ENCODE measurements at regions of chr1 and their contacts with region 1.

Region 1: GRCh38 chr1:212760126-212760823 is 31.3 kb downstream of the NSL1 start:
- DNase-seq: peak in 1 of 2 experiments; percentile 83
- H3K4me3 ChIP-seq: no peak overlapping the region
- H3K27ac ChIP-seq: no peak overlapping the region
- H3K4me1 ChIP-seq: peaks cover 0 to 3% (median 0%) of the 10 kb centered on the region in 4 experiments; a peak in 1 of 7 replicates
- H3K27me3 ChIP-seq: no peaks in the 10 kb centered on the region
- CTCF ChIP-seq: peak; percentile 79 to 94 (median 92)
- EP300 ChIP-seq: no peak
- POLR2A ChIP-seq: no peak
- RAD21 ChIP-seq: peak; percentile 65 to 78

Region 2: GRCh38 chr1:212743901-212744475 is 16.3 kb before region 1 on chr1:
- CTCF ChIA-PET with region 1: interaction called, 36 read pairs
- POLR2A ChIA-PET with region 1: interaction called, 3 read pairs
- DNase-seq: no peak
- H3K4me3 ChIP-seq: no peak overlapping the region
- H3K27ac ChIP-seq: no peak overlapping the region
- H3K4me1 ChIP-seq: no peaks in the 10 kb centered on the region
- H3K27me3 ChIP-seq: no peaks in the 10 kb centered on the region
- CTCF ChIP-seq: no peak
- EP300 ChIP-seq: no peak
- POLR2A ChIP-seq: no peak
- RAD21 ChIP-seq: no peak

Region 3: GRCh38 chr1:212827824-212828278 is 67.6 kb after region 1 on chr1:
- CTCF ChIA-PET with region 1: no interaction called
- POLR2A ChIA-PET with region 1: no interaction called
- DNase-seq: no peak
- H3K4me3 ChIP-seq: no peak overlapping the region
- H3K27ac ChIP-seq: no peak overlapping the region
- H3K4me1 ChIP-seq: peaks cover 0 to 2% (median 0%) of the 10 kb centered on the region in 4 experiments; a peak in 1 of 7 replicates
- H3K27me3 ChIP-seq: no peaks in the 10 kb centered on the region
- CTCF ChIP-seq: no peak
- EP300 ChIP-seq: no peak
- POLR2A ChIP-seq: no peak
- RAD21 ChIP-seq: no peak